ENCODE measurements at regions of chr1 and their contacts with region 1.

Region 1: GRCh38 chr1:75632350-75632949 is 21.5 kb upstream of the SLC44A5 start:
- ATAC-seq: peak; percentile 55 to 74 (median 60)
- H3K4me3 ChIP-seq: no peak overlapping the region
- H3K27ac ChIP-seq: no peak overlapping the region
- H3K4me1 ChIP-seq: peaks cover 12 to 18% of the 10 kb centered on the region in 2 donors

Region 2: DNA sequence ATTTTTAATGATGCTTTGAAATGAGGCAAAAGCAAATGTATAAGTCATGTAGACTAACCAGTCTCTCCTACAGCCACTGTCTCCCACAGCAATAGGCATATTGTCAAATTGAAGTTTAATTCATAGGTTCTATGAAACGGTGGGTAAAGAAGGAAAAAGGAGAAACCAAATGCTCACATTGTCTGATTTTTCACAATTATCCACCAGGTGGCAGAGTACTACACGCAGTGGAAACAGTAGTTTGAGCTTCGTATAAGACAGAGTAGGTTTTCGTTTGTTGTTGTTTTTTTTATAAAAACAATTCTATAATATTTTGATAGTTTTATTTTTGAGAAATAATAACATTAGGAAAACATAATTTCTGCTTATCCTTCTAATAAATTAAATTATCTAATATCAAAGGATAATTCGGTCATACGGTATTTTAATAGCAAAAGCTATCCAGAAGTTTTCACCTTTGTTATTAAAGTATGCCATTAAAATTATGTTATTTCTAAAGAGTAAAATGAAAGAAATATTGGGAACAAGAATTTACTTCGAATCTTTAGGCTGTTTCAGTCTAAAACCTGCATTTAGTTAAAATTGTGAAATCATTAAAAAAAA is 860.4 kb before region 1 on chr1:
- in situ Hi-C with region 1: loop called in 1 of 9 experiments (anchors 25 kb)
- ATAC-seq: peak; percentile 32 to 76 (median 58)
- H3K4me3 ChIP-seq: no peak overlapping the region
- H3K27ac ChIP-seq: no peak overlapping the region
- H3K4me1 ChIP-seq: no peaks in the 10 kb centered on the region

Region 3: GRCh38 chr1:75233302-75233929 is 399.0 kb before region 1 on chr1:
- in situ Hi-C with region 1: loop called in 1 of 9 experiments (anchors 25 kb)
- ATAC-seq: peak in 6 of 8 experiments; percentile 53 to 86 (median 64)
- H3K4me3 ChIP-seq: no peak overlapping the region
- H3K27ac ChIP-seq: no peak overlapping the region
- H3K4me1 ChIP-seq: no peaks in the 10 kb centered on the region

Region 4: GRCh38 chr1:75265792-75266191 is 366.7 kb before region 1 on chr1:
- in situ Hi-C with region 1: loop called in 6 of 9 experiments (anchors 25 kb)
- ATAC-seq: peak; percentile 45 to 62 (median 55)
- H3K4me3 ChIP-seq: no peak overlapping the region
- H3K27ac ChIP-seq: no peak overlapping the region
- H3K4me1 ChIP-seq: no peaks in the 10 kb centered on the region

Region 5: DNA sequence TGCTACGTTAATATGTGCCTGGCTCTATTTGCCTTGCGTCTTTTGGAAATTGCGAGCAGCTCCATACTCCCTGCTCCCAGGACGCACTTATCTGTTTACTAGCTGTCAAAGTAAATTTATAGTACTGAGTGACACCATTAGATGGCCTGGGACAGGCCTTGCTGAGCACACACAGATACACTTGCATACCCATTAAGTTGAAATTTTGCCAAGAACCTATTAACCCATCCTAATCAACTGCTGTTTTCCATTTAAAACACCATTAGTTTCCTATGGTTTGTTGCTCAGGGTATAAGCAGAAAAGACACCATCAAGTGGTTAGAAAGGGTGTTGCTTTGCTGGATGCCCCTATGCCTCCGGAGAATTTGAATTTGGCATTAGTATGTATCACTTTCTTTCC is 208.8 kb before region 1 on chr1:
- in situ Hi-C with region 1: no loop called
- ATAC-seq: peak in 2 of 8 experiments; percentile 52
- H3K4me3 ChIP-seq: no peak overlapping the region
- H3K27ac ChIP-seq: no peak overlapping the region
- H3K4me1 ChIP-seq: peaks cover 4 to 5% of the 10 kb centered on the region in 2 donors

Region 6: DNA sequence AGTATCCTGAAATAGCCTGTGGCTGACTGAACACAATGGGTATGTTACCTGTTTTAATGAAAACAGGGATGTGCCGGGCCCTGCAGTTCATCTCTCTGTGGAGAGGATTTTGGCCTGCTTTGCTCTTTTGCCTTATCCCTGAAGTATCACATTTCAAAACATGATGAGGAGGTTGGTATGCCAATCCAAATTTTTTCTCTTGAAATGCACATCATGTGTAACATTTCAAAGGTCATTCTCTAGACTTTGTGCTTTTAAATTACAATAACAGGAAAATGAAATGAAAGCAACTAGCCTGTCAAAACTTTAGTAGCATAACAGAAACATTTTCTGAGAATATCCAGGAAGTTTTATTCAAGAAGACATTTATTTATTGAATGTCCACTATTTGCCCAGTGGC is 140.4 kb before region 1 on chr1:
- in situ Hi-C with region 1: no loop called
- ATAC-seq: no peak
- H3K4me3 ChIP-seq: no peak overlapping the region
- H3K27ac ChIP-seq: no peak overlapping the region
- H3K4me1 ChIP-seq: no peaks in the 10 kb centered on the region

Region 7: GRCh38 chr1:75727571-75727970 is 95.1 kb after region 1 on chr1:
- in situ Hi-C with region 1: no loop called
- ATAC-seq: no peak
- H3K4me3 ChIP-seq: no peak overlapping the region
- H3K27ac ChIP-seq: no peak overlapping the region
- H3K4me1 ChIP-seq: peaks cover 16 to 23% of the 10 kb centered on the region in 2 donors

Region 8: GRCh38 chr1:75980972-75981897 is 348.8 kb after region 1 on chr1:
- in situ Hi-C with region 1: no loop called
- ATAC-seq: peak in 2 of 8 experiments; percentile 64 to 80
- H3K4me3 ChIP-seq: no peak overlapping the region
- H3K27ac ChIP-seq: no peak overlapping the region
- H3K4me1 ChIP-seq: no peaks in the 10 kb centered on the region